GM12878 (cell line): ENCODE measurements at regions of chr20 and their contacts with region 1.

Region 1: GRCh38 chr20:8722276-8722928 is 346.5 kb upstream of the PLCB4 start:
- DNase-seq: peak; percentile 30
- ATAC-seq: peak; percentile 93
- H3K4me3 ChIP-seq: no peak overlapping the region
- H3K27ac ChIP-seq: no peak overlapping the region
- H3K4me1 ChIP-seq: no peaks in the 10 kb centered on the region
- H3K27me3 ChIP-seq: peaks cover 1 to 2% of the 10 kb centered on the region in 2 experiments; a peak in 2 of 4 replicates
- CTCF ChIP-seq: peak; percentile 68 to 80 (median 68); a peak in 5 of 6 replicates
- EP300 ChIP-seq: no peak
- POLR2A ChIP-seq: no peak
- RAD21 ChIP-seq: peak; percentile 92

Region 2: GRCh38 chr20:6828794-6829423 is 1893.5 kb before region 1 on chr20:
- CTCF ChIA-PET with region 1: no interaction called
- POLR2A ChIA-PET with region 1: no interaction called
- RAD21 ChIA-PET with region 1: no interaction called
- SMC1A ChIA-PET with region 1: no interaction called
- in situ Hi-C with region 1: no loop called
- intact Hi-C with region 1: loop called (anchors 2 kb)
- DNase-seq: peak; percentile 30
- ATAC-seq: peak; percentile 92
- H3K4me3 ChIP-seq: no peak overlapping the region
- H3K27ac ChIP-seq: no peak overlapping the region
- H3K4me1 ChIP-seq: no peaks in the 10 kb centered on the region
- H3K27me3 ChIP-seq: no peaks in the 10 kb centered on the region; a peak in 1 of 4 replicates
- CTCF ChIP-seq: peak; percentile 57 to 72 (median 63)
- EP300 ChIP-seq: no peak
- POLR2A ChIP-seq: no peak
- RAD21 ChIP-seq: peak; percentile 75

Region 3: DNA sequence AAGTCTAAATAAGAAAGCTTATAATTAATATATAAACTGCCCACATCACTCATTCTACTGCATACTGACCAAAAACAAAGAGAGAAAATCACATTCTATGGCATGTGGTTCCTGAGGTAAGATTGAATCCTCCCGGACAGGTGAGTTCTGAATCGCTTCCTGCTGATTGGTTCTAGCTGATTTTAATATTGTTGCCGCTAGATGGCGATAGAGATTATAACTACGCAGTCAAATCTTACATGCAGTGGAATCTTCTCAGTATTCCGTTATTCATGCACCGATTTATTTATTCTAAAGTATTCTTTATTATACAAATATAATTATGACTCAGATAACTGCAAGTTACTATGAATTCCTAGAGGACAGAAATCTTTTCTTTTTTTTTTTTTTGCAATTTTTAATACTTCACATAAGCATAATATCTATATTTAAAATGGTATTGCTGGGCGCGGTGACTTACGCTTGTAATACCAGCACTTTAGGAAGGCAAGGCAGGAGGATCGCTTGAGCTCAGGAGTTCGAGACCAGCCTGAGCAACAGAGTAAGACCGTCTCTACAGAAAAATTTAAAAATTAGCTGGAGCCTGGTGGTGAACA is 678.6 kb before region 1 on chr20:
- CTCF ChIA-PET with region 1: interaction called, 193 read pairs
- POLR2A ChIA-PET with region 1: no interaction called
- RAD21 ChIA-PET with region 1: interaction called, 72 read pairs
- SMC1A ChIA-PET with region 1: interaction called, 86 read pairs
- in situ Hi-C with region 1: loop called (anchors 5 kb)
- intact Hi-C with region 1: loop called (anchors 1 kb)
- DNase-seq: no peak
- ATAC-seq: peak; percentile 86
- H3K4me3 ChIP-seq: no peak overlapping the region
- H3K27ac ChIP-seq: no peak overlapping the region
- H3K4me1 ChIP-seq: no peaks in the 10 kb centered on the region
- H3K27me3 ChIP-seq: no peaks in the 10 kb centered on the region
- CTCF ChIP-seq: peak; percentile 50 to 72 (median 62); a peak in 5 of 6 replicates
- EP300 ChIP-seq: no peak
- POLR2A ChIP-seq: no peak
- RAD21 ChIP-seq: peak; percentile 68

Region 4: DNA sequence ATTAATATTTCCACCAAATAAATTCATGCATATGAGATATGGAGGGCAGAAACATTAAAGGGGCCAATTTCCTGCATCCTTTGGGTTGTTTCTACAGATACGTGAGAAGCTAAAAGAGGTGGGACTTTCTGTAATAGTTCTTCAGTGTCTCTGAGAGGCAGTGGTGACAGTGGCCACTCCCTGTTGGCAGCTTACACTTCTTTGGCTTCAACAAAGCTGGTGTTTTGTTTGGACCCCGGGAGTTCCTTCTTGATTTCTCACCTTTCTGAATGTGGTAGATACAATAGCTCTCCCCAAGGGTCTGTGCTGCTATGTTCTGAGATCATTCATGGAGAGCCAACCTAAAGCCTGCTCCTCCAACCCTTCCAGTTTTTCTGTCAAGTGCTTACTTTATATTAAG is 582.5 kb before region 1 on chr20:
- CTCF ChIA-PET with region 1: interaction called, 39 read pairs
- POLR2A ChIA-PET with region 1: no interaction called
- RAD21 ChIA-PET with region 1: no interaction called
- SMC1A ChIA-PET with region 1: interaction called, 19 read pairs
- in situ Hi-C with region 1: loop called (anchors 5 kb)
- intact Hi-C with region 1: no loop called
- DNase-seq: no peak
- ATAC-seq: no peak
- H3K4me3 ChIP-seq: no peak overlapping the region
- H3K27ac ChIP-seq: no peak overlapping the region
- H3K4me1 ChIP-seq: no peaks in the 10 kb centered on the region
- H3K27me3 ChIP-seq: peaks cover 0 to 2% of the 10 kb centered on the region in 2 experiments; a peak in 2 of 4 replicates
- CTCF ChIP-seq: no peak
- EP300 ChIP-seq: no peak
- POLR2A ChIP-seq: no peak
- RAD21 ChIP-seq: no peak

Region 5: GRCh38 chr20:8389381-8390036 is 332.9 kb before region 1 on chr20:
- CTCF ChIA-PET with region 1: interaction called, 36 read pairs
- POLR2A ChIA-PET with region 1: no interaction called
- RAD21 ChIA-PET with region 1: no interaction called
- SMC1A ChIA-PET with region 1: interaction called, 22 read pairs
- in situ Hi-C with region 1: no loop called
- intact Hi-C with region 1: loop called (anchors 5 kb)
- DNase-seq: no peak
- ATAC-seq: peak; percentile 47; the same call in 2 of the 3 replicates
- H3K4me3 ChIP-seq: no peak overlapping the region
- H3K27ac ChIP-seq: no peak overlapping the region
- H3K4me1 ChIP-seq: no peaks in the 10 kb centered on the region
- H3K27me3 ChIP-seq: no peaks in the 10 kb centered on the region
- CTCF ChIP-seq: peak; percentile 11 to 48 (median 46); a peak in 5 of 6 replicates
- EP300 ChIP-seq: no peak
- POLR2A ChIP-seq: no peak
- RAD21 ChIP-seq: peak; percentile 42; the same call in 1 of the 2 replicates

Region 6: GRCh38 chr20:8587810-8588209 is 134.6 kb before region 1 on chr20:
- CTCF ChIA-PET with region 1: interaction called, 12 read pairs
- POLR2A ChIA-PET with region 1: no interaction called
- RAD21 ChIA-PET with region 1: no interaction called
- SMC1A ChIA-PET with region 1: no interaction called
- in situ Hi-C with region 1: no loop called
- intact Hi-C with region 1: no loop called
- DNase-seq: no peak
- ATAC-seq: peak; percentile 87
- H3K4me3 ChIP-seq: no peak overlapping the region
- H3K27ac ChIP-seq: no peak overlapping the region
- H3K4me1 ChIP-seq: no peaks in the 10 kb centered on the region
- H3K27me3 ChIP-seq: no peaks in the 10 kb centered on the region
- CTCF ChIP-seq: no peak
- EP300 ChIP-seq: peak in 1 of 2 experiments; percentile 18; a peak in 1 of 4 replicates
- POLR2A ChIP-seq: no peak
- RAD21 ChIP-seq: no peak

Region 7: DNA sequence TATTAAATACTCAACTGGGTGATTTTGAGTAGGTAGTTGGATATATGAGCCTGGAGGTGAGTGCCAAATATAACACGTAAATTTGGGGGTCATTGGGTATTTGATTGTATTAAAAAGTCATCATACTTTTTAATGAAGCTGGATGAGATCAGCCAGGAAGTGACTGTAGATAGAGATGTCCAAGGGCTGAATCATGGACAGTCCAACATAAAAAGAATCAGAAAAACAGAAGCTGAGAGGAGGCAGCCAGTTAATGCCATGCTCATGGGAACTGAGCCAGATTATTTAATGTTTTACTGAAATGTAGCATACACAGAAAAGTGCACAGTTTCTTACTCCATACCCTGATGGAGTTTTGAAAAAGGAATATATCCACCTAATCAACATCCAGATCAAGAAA is 89.0 kb before region 1 on chr20:
- CTCF ChIA-PET with region 1: no interaction called
- POLR2A ChIA-PET with region 1: no interaction called
- RAD21 ChIA-PET with region 1: no interaction called
- SMC1A ChIA-PET with region 1: no interaction called
- in situ Hi-C with region 1: no loop called
- intact Hi-C with region 1: no loop called
- DNase-seq: no peak
- ATAC-seq: no peak
- H3K4me3 ChIP-seq: no peak overlapping the region
- H3K27ac ChIP-seq: no peak overlapping the region
- H3K4me1 ChIP-seq: no peaks in the 10 kb centered on the region
- H3K27me3 ChIP-seq: no peaks in the 10 kb centered on the region
- CTCF ChIP-seq: no peak
- EP300 ChIP-seq: no peak
- POLR2A ChIP-seq: no peak
- RAD21 ChIP-seq: no peak

Region 8: DNA sequence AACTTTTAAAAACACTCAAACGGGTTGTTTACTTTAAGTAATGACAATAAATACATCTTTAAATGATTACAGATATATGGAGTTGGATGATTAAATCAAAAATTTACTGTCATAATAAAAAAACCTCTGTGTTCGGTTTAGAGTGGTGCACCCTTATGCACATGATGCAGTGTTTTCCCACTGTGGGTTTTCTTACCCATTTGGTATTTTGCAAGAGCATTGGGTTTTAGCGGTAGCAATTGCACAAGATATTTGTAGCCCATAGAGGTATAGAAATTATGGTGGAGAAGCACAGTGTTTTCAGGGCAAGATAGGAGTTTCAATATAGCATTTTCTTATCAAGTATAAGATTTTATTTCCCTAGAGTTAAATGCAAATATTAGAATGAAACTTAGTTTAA is 64.3 kb before region 1 on chr20:
- CTCF ChIA-PET with region 1: no interaction called
- POLR2A ChIA-PET with region 1: no interaction called
- RAD21 ChIA-PET with region 1: no interaction called
- SMC1A ChIA-PET with region 1: no interaction called
- in situ Hi-C with region 1: no loop called
- intact Hi-C with region 1: no loop called
- DNase-seq: no peak
- ATAC-seq: no peak
- H3K4me3 ChIP-seq: no peak overlapping the region
- H3K27ac ChIP-seq: no peak overlapping the region
- H3K4me1 ChIP-seq: no peaks in the 10 kb centered on the region
- H3K27me3 ChIP-seq: no peaks in the 10 kb centered on the region; a peak in 1 of 4 replicates
- CTCF ChIP-seq: no peak
- EP300 ChIP-seq: no peak
- POLR2A ChIP-seq: no peak
- RAD21 ChIP-seq: no peak

Region 9: DNA sequence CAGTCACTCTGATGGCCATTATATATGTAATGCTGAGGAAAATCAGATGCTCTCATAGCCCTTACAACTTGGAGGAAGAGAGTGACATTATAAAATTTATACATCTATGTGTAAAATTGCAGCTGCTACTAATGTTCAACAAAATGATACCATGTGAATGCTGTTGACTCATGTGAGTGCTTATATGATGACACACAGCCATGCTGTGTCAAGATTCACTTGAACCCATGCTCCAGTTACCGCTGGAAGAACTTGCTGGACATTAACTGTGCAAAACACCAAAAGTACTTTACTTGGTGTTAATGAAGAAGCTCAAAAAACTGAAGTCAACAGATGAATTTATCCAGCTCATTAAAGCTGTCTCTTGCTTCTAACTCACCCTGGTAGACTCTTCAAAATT is 27.6 kb after region 1 on chr20:
- CTCF ChIA-PET with region 1: interaction called, 14 read pairs
- POLR2A ChIA-PET with region 1: no interaction called
- RAD21 ChIA-PET with region 1: no interaction called
- SMC1A ChIA-PET with region 1: interaction called, 7 read pairs
- in situ Hi-C with region 1: no loop called
- intact Hi-C with region 1: no loop called
- DNase-seq: no peak
- ATAC-seq: no peak
- H3K4me3 ChIP-seq: no peak overlapping the region
- H3K27ac ChIP-seq: no peak overlapping the region
- H3K4me1 ChIP-seq: no peaks in the 10 kb centered on the region
- H3K27me3 ChIP-seq: no peaks in the 10 kb centered on the region; a peak in 1 of 4 replicates
- CTCF ChIP-seq: no peak
- EP300 ChIP-seq: no peak
- POLR2A ChIP-seq: no peak
- RAD21 ChIP-seq: no peak